CD8-positive, alpha-beta memory T cell (primary cell): ENCODE measurements at regions of chr7 and their contacts with region 1.

Region 1: GRCh38 chr7:26200444-26201246 is at the start of gene HNRNPA2B1:
- DNase-seq: peak; percentile 93 to 99 (median 99)
- H3K4me3 ChIP-seq: peak within 1 kb of the TSS; percentile 94
- H3K4me3 Mint-ChIP-seq: peak within 1 kb of the TSS; percentile 92 to 100 (median 99)
- H3K27ac ChIP-seq: peak within 1 kb of the TSS; percentile 93
- H3K27ac Mint-ChIP-seq: peak within 1 kb of the TSS; percentile 95 to 100 (median 98)
- H3K4me1 ChIP-seq: peaks cover 36% of the 10 kb centered on the region
- H3K4me1 Mint-ChIP-seq: peaks cover 51 to 60% (median 54%) of the 10 kb centered on the region in 3 donors
- H3K27me3 ChIP-seq: no peaks in the 10 kb centered on the region
- H3K27me3 Mint-ChIP-seq: peaks cover 0 to 14% of the 10 kb centered on the region in 2 donors
- total RNA-seq, gene HNRNPA2B1: 950 to 966 TPM

Region 2: GRCh38 chr7:26034391-26034790 is 166.3 kb before region 1 on chr7:
- CTCF ChIA-PET with region 1: no interaction called
- POLR2A ChIA-PET with region 1: no interaction called
- DNase-seq: no peak
- H3K4me3 ChIP-seq: no peak overlapping the region
- H3K4me3 Mint-ChIP-seq: no peak overlapping the region
- H3K27ac ChIP-seq: no peak overlapping the region
- H3K27ac Mint-ChIP-seq: no peak overlapping the region
- H3K4me1 ChIP-seq: no peaks in the 10 kb centered on the region
- H3K4me1 Mint-ChIP-seq: peaks cover 0 to 5% (median 4%) of the 10 kb centered on the region in 3 donors
- H3K27me3 ChIP-seq: no peaks in the 10 kb centered on the region
- H3K27me3 Mint-ChIP-seq: peaks cover 12 to 33% of the 10 kb centered on the region in 2 donors

Region 3: GRCh38 chr7:26078437-26079336 is 122.0 kb before region 1 on chr7:
- CTCF ChIA-PET with region 1: interaction called, 33 read pairs
- POLR2A ChIA-PET with region 1: interaction called, 4 read pairs
- DNase-seq: peak; percentile 64 to 86 (median 68)
- H3K4me3 ChIP-seq: no peak overlapping the region
- H3K4me3 Mint-ChIP-seq: peak overlapping the region in 3 of 7 donors; percentile 49 to 52 (median 49)
- H3K27ac ChIP-seq: no peak overlapping the region
- H3K27ac Mint-ChIP-seq: no peak overlapping the region
- H3K4me1 ChIP-seq: peaks cover 7% of the 10 kb centered on the region
- H3K4me1 Mint-ChIP-seq: peaks cover 7 to 8% (median 8%) of the 10 kb centered on the region in 3 donors
- H3K27me3 ChIP-seq: no peaks in the 10 kb centered on the region
- H3K27me3 Mint-ChIP-seq: peaks cover 32 to 68% of the 10 kb centered on the region in 2 donors

Region 4: GRCh38 chr7:26090927-26091519 is 109.6 kb before region 1 on chr7:
- CTCF ChIA-PET with region 1: interaction called, 94 read pairs
- POLR2A ChIA-PET with region 1: interaction called, 8 read pairs
- DNase-seq: peak in 2 of 5 donors; percentile 27 to 49
- H3K4me3 ChIP-seq: no peak overlapping the region
- H3K4me3 Mint-ChIP-seq: peak overlapping the region in 1 of 7 donors; percentile 0
- H3K27ac ChIP-seq: no peak overlapping the region
- H3K27ac Mint-ChIP-seq: no peak overlapping the region
- H3K4me1 ChIP-seq: no peaks in the 10 kb centered on the region
- H3K4me1 Mint-ChIP-seq: peaks cover 8 to 18% (median 17%) of the 10 kb centered on the region in 3 donors
- H3K27me3 ChIP-seq: no peaks in the 10 kb centered on the region
- H3K27me3 Mint-ChIP-seq: peaks cover 0 to 2% of the 10 kb centered on the region in 2 donors

Region 5: DNA sequence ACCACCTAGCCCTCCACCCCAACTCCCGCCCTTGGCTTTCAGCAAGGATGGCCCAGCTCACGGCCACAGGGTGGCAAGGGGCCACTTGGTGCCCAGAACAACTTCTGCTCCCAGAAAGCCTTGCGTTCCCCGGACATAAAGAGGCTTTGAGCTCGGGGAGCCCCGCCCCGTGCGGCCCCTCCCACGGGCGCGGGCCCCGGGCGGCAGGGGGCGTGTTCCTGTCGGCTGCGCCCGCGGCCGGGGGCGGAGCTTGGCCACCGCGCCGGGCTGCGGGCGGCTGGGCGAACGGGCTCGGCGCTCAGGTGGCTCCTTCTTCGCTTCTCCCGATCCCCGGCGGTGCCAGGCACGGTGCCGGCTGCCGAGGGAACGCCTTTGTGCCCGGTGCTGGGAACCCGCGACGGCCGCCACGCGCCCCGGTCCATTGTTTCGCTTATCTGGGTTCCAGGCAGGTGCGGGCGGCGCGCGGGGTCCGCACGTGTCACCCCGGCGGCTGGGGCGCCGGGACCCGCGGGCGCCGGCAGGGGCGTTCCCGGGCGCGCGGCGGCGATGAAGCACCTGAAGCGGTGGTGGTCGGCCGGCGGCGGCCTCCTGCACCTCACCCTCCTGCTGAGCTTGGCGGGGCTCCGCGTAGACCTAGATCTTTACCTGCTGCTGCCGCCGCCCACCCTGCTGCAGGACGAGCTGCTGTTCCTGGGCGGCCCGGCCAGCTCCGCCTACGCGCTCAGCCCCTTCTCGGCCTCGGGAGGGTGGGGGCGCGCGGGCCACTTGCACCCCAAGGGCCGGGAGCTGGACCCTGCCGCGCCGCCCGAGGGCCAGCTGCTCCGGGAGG is 48.5 kb before region 1 on chr7 and contains the start of gene NFE2L3:
- CTCF ChIA-PET with region 1: interaction called, 31 read pairs
- POLR2A ChIA-PET with region 1: interaction called, 55 read pairs
- DNase-seq: peak; percentile 76 to 85 (median 78)
- H3K4me3 ChIP-seq: peak within 1 kb of the TSS; percentile 72
- H3K4me3 Mint-ChIP-seq: peak within 1 kb of the TSS; percentile 91 to 99 (median 93)
- H3K27ac ChIP-seq: peak within 1 kb of the TSS; percentile 57
- H3K27ac Mint-ChIP-seq: peak within 1 kb of the TSS; percentile 92 to 97 (median 94)
- H3K4me1 ChIP-seq: peaks cover 50% of the 10 kb centered on the region
- H3K4me1 Mint-ChIP-seq: peaks cover 48 to 59% (median 52%) of the 10 kb centered on the region in 3 donors
- H3K27me3 ChIP-seq: no peaks in the 10 kb centered on the region
- H3K27me3 Mint-ChIP-seq: no peaks in the 10 kb centered on the region
- total RNA-seq, gene NFE2L3: 43.5 to 47.4 TPM

Region 6: GRCh38 chr7:26187380-26188205 is 13.1 kb before region 1 on chr7:
- CTCF ChIA-PET with region 1: interaction called, 19 read pairs
- POLR2A ChIA-PET with region 1: interaction called, 50 read pairs
- DNase-seq: peak in 1 of 5 donors; percentile 22
- H3K4me3 ChIP-seq: no peak overlapping the region
- H3K4me3 Mint-ChIP-seq: peak overlapping the region in 1 of 7 donors; percentile 11
- H3K27ac ChIP-seq: no peak overlapping the region
- H3K27ac Mint-ChIP-seq: peak overlapping the region; percentile 36 to 87 (median 68)
- H3K4me1 ChIP-seq: peaks cover 44% of the 10 kb centered on the region
- H3K4me1 Mint-ChIP-seq: peaks cover 76 to 95% (median 90%) of the 10 kb centered on the region in 3 donors
- H3K27me3 ChIP-seq: no peaks in the 10 kb centered on the region
- H3K27me3 Mint-ChIP-seq: no peaks in the 10 kb centered on the region

Region 7: DNA sequence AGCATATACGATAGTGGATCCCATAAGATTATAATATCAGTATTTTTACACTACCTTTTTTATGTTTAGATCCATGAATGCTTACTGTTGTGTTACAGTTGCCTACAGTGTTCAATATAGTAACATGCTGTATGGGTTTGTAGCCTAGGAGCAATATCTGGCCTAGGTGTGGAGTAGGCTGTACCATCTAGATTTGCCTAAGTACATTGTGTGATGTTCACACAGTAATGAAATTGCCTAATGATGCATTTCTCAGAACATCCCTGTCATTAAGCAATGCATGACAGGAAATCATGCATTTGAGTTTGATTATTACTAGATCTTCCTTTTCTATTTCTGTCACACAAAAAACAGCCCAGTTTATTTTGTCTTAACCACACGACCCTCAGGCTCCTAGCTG is 15.4 kb after region 1 on chr7:
- CTCF ChIA-PET with region 1: interaction called, 11 read pairs
- POLR2A ChIA-PET with region 1: interaction called, 5 read pairs
- DNase-seq: no peak
- H3K4me3 ChIP-seq: no peak overlapping the region
- H3K4me3 Mint-ChIP-seq: no peak overlapping the region
- H3K27ac ChIP-seq: no peak overlapping the region
- H3K27ac Mint-ChIP-seq: no peak overlapping the region
- H3K4me1 ChIP-seq: no peaks in the 10 kb centered on the region
- H3K4me1 Mint-ChIP-seq: peaks cover 0 to 19% (median 11%) of the 10 kb centered on the region in 3 donors
- H3K27me3 ChIP-seq: no peaks in the 10 kb centered on the region
- H3K27me3 Mint-ChIP-seq: peaks cover 0 to 4% of the 10 kb centered on the region in 2 donors

Region 8: GRCh38 chr7:26365077-26365900 is 164.6 kb after region 1 on chr7:
- CTCF ChIA-PET with region 1: interaction called, 11 read pairs
- POLR2A ChIA-PET with region 1: no interaction called
- DNase-seq: peak in 4 of 5 donors; percentile 12 to 62 (median 58)
- H3K4me3 ChIP-seq: no peak overlapping the region
- H3K4me3 Mint-ChIP-seq: no peak overlapping the region
- H3K27ac ChIP-seq: no peak overlapping the region
- H3K27ac Mint-ChIP-seq: peak overlapping the region in 3 of 8 donors; percentile 52 to 92 (median 79)
- H3K4me1 ChIP-seq: peaks cover 7% of the 10 kb centered on the region
- H3K4me1 Mint-ChIP-seq: peaks cover 7 to 12% (median 8%) of the 10 kb centered on the region in 3 donors
- H3K27me3 ChIP-seq: no peaks in the 10 kb centered on the region
- H3K27me3 Mint-ChIP-seq: no peaks in the 10 kb centered on the region